GM12878 (cell line): ENCODE measurements at regions of chr18 and their contacts with region 1.

Region 1: DNA sequence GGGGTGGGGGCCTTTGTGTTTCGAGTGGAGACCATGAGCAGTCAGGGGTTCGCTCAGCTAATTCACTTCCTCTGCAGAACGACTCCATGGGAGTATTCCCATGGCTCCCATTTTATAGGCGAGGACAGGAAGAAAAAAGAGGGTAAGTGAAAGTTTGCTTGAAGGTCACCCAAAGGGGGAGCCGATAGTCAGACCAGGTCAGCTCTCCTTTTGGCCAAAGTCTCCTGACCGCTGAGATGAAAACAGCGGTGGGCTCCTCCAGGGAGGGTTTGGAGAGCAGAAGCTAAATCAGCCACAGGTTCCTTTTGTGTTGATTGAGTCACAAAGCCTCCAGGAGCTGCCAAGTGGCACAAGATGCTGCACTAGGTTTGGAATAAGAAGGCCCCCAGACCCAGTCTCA is 34.1 kb upstream of the CTAGE1 start:
- DNase-seq: no peak
- ATAC-seq: no peak
- H3K4me3 ChIP-seq: no peak overlapping the region
- H3K27ac ChIP-seq: no peak overlapping the region
- H3K4me1 ChIP-seq: no peaks in the 10 kb centered on the region
- H3K27me3 ChIP-seq: no peaks in the 10 kb centered on the region
- CTCF ChIP-seq: no peak
- EP300 ChIP-seq: no peak
- POLR2A ChIP-seq: no peak
- RAD21 ChIP-seq: no peak

Region 2: GRCh38 chr18:22391407-22392345 is 60.1 kb before region 1 on chr18:
- CTCF ChIA-PET with region 1: no interaction called
- POLR2A ChIA-PET with region 1: no interaction called
- RAD21 ChIA-PET with region 1: no interaction called
- SMC1A ChIA-PET with region 1: no interaction called
- in situ Hi-C with region 1: no loop called
- intact Hi-C with region 1: loop called (anchors 10 kb)
- DNase-seq: no peak
- ATAC-seq: no peak
- H3K4me3 ChIP-seq: no peak overlapping the region
- H3K27ac ChIP-seq: no peak overlapping the region
- H3K4me1 ChIP-seq: no peaks in the 10 kb centered on the region
- H3K27me3 ChIP-seq: no peaks in the 10 kb centered on the region
- CTCF ChIP-seq: no peak
- EP300 ChIP-seq: no peak
- POLR2A ChIP-seq: no peak
- RAD21 ChIP-seq: no peak

Region 3: DNA sequence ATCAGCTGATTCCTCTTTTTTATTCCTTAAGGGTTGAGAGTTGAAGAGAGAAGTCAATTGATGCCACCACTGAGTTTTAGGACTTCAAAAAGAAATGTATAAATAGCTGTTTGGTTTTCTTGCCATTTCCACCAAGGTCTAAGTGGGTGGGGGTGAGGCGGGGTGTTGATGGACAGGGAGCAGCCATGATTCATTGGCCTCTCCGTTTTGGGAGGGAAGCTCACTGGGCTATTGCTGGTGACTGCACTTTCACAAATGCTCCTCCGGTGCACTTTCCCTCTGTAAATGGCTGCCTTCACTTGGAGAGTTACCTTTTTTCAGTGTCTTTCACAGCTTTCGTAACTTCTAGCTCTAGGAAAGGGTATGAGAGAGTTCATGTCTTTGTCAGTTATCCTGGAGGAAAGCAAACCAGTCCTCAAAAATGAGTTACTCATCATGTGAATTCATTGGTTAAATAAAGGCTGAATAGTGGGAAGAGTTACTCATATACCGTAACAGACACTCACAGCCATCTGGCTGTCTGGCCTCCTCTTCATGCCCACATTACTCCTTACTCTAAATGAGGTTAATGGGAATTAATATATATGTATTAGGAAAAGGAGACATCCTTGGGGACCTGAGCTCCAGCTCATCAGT is 16.7 kb before region 1 on chr18:
- CTCF ChIA-PET with region 1: no interaction called
- POLR2A ChIA-PET with region 1: no interaction called
- RAD21 ChIA-PET with region 1: no interaction called
- SMC1A ChIA-PET with region 1: no interaction called
- in situ Hi-C with region 1: no loop called
- intact Hi-C with region 1: no loop called
- DNase-seq: no peak
- ATAC-seq: no peak
- H3K4me3 ChIP-seq: no peak overlapping the region
- H3K27ac ChIP-seq: no peak overlapping the region
- H3K4me1 ChIP-seq: no peaks in the 10 kb centered on the region
- H3K27me3 ChIP-seq: no peaks in the 10 kb centered on the region
- CTCF ChIP-seq: no peak
- EP300 ChIP-seq: no peak
- POLR2A ChIP-seq: no peak
- RAD21 ChIP-seq: no peak